ENCODE measurements at regions of chr13 and their contacts with region 1.

Region 1: DNA sequence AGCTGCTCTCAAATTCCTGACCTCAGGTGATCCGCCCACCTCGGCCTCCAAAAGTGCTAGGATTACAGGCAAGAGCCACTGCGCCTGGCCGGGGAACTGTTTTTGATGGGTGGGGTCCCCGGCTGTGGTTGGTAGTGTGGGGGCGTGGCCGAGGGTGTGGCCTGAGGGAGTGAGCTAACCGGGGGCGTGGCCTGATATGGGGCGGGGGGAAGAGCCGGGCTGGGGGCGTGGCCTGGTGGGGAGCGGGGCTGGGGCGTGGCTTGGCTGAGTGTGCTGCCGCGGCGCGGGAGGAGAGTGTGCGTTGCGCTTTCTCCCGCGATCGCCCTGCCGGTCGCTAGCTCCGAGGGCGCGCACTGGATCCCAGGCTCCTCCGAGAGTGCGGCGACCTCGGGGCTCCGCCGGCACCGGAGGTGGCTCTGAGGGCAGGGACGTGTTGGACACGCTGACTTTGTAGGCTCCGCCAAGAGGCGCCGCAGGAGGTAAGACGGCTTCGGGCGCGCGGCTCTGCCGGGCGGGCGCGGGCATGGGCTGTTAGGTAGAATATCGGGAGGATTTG is at the start of gene SPATA13:
- DNase-seq: peak; percentile 88
- H3K4me3 Mint-ChIP-seq: peak within 1 kb of the TSS; percentile 90
- H3K27ac Mint-ChIP-seq: peak within 1 kb of the TSS; percentile 50
- H3K4me1 Mint-ChIP-seq: peaks cover 22% of the 10 kb centered on the region
- H3K27me3 Mint-ChIP-seq: peaks cover 17% of the 10 kb centered on the region
- total RNA-seq, gene SPATA13: 41.5 and 44.9 TPM in 2 replicates

Region 2: GRCh38 chr13:23960566-23961156 is 199.9 kb before region 1 on chr13:
- intact Hi-C with region 1: loop called (anchors 10 kb)
- DNase-seq: no peak
- H3K4me3 Mint-ChIP-seq: no peak overlapping the region
- H3K27ac Mint-ChIP-seq: no peak overlapping the region
- H3K4me1 Mint-ChIP-seq: peaks cover 31% of the 10 kb centered on the region
- H3K27me3 Mint-ChIP-seq: peaks cover 2% of the 10 kb centered on the region

Region 3: DNA sequence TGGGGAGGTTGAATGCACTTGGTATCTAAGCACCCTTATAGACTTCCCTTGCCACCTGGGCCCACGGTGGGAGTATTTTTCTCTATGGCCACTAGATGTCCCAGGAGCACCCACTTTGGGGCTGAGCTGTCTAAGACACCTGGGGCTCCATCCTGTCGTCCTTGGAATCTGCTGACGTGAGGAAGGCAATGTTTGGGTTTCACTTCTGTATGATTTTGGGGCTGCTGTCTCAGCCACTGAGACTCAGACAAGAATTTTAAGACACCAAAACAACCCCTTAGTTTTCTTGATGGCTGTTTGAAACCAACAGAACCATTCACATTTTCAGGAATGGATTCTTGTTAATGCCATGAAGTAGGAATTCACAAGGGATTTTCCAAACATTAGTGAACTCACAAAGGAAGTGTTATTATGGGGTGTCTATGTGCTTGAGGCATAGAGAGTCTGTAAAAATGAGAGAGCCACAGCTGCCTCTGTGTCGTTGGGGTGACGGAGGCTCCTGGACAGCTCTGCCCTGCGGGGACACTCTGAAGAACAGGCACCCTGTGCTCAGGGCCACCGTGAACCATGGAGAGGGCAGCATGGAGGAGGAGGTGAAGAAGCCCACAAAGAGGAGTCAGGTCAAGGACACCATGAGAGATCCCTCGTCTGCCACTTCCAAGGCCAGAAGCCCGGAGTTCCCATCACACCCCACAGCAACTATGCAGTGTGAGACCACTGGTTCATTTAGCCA is 106.8 kb before region 1 on chr13:
- intact Hi-C with region 1: loop called (anchors 5 kb)
- DNase-seq: peak; percentile 49
- H3K4me3 Mint-ChIP-seq: no peak overlapping the region
- H3K27ac Mint-ChIP-seq: no peak overlapping the region
- H3K4me1 Mint-ChIP-seq: peaks cover 17% of the 10 kb centered on the region
- H3K27me3 Mint-ChIP-seq: peaks cover 15% of the 10 kb centered on the region

Region 4: GRCh38 chr13:24127038-24127643 is 33.4 kb before region 1 on chr13:
- intact Hi-C with region 1: loop called (anchors 5 kb)
- DNase-seq: no peak
- H3K4me3 Mint-ChIP-seq: no peak overlapping the region
- H3K27ac Mint-ChIP-seq: no peak overlapping the region
- H3K4me1 Mint-ChIP-seq: peaks cover 46% of the 10 kb centered on the region
- H3K27me3 Mint-ChIP-seq: peaks cover 10% of the 10 kb centered on the region

Region 5: DNA sequence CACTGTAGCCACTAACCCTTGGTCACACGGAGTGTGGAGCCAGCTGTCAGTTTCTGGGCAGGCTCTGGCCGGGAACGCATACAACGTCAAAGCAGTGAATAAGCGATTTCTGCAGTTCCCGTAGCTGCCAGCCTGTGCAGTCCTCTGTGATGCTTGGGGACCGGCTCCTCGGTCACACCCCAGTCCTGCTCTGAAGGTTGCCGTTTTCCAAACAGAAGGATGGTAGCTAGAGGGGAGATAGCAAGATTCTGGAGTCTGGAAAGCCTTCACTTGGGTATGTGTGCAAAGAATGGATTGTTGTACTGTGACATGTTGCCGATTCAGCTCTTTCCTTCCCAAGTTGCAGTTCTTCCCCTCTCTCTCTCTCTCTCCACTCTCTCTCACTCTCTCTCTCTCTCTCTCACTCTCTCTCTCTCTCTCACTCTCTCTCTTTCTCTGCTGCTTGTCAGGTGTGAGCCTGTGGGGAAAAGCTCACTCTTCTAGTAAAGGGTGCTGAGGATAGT is 110.2 kb after region 1 on chr13:
- intact Hi-C with region 1: loop called (anchors 5 kb)
- DNase-seq: peak; percentile 61
- H3K4me3 Mint-ChIP-seq: peak overlapping the region; percentile 97
- H3K27ac Mint-ChIP-seq: peak overlapping the region; percentile 95
- H3K4me1 Mint-ChIP-seq: peaks cover 81% of the 10 kb centered on the region
- H3K27me3 Mint-ChIP-seq: no peaks in the 10 kb centered on the region